ENCODE measurements at regions of chr3 and their contacts with region 1.

Region 1: GRCh38 chr3:4986782-4987537 is 7.7 kb downstream of the BHLHE40 start:
- DNase-seq: peak; percentile 97 to 99 (median 98)
- ATAC-seq: peak; percentile 84 to 92 (median 88)
- H3K4me3 ChIP-seq: peak overlapping the region; percentile 9 to 100 (median 48)
- H3K27ac ChIP-seq: peak overlapping the region; percentile 83 to 100 (median 100)
- H3K4me1 ChIP-seq: peaks cover 10 to 86% (median 64%) of the 10 kb centered on the region in 12 donors
- H3K27me3 ChIP-seq: no peaks in the 10 kb centered on the region
- CTCF ChIP-seq: peak in 3 of 12 donors; percentile 14 to 27 (median 16)
- POLR2A ChIP-seq: peak in 1 of 2 donors; percentile 70

Region 2: DNA sequence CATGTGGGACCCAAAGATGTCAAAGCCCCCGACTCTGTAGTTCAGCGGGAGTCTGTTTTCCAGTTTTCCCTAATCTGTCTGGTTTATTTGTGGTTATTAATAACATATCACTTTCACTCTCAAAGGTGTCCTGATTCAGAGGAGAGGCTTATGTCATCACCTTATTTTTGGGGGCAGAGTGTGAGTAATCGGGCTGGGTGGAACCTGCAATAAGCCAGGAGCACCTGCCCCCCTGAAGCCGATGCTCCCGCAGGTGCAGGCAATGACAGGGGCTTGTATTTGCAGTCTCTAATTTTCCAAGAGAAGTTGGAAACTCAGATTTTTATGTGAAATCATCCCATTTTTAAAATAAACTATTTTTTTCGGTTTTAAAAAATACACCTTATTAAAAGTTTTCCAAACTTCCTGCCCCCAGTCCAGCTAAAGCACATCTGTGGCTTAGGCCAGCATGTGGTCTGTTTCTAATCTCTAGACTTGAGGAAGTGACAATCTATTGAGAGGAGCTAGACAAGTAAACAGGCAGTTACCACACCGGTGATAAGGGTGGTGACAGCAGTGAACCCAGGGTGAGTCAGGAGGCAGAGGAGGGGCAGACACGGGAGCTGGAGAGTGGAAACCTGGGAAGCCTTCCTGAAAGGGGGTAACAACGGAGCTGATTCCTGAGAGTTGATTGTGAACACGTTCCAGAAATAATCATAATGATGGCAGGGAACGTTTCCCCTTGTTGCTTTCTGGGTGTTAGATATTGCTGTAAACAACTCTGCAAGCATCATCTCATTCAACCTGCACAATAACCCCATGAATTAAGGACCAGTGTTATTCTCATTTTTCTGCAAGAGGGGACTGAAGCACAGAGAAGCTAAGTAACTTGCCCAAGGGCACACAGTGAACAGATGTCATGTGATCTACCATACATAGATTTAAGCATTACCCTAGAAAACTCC is 29.5 kb after region 1 on chr3:
- intact Hi-C with region 1: loop called in 1 of 10 experiments (anchors 2 kb)
- DNase-seq: peak in 3 of 5 donors; percentile 50 to 80 (median 54)
- ATAC-seq: peak; percentile 39 to 80 (median 76)
- H3K4me3 ChIP-seq: no peak overlapping the region
- H3K27ac ChIP-seq: peak overlapping the region in 8 of 12 donors; percentile 4 to 85 (median 66)
- H3K4me1 ChIP-seq: peaks cover 6 to 71% (median 35%) of the 10 kb centered on the region in 12 donors
- H3K27me3 ChIP-seq: no peaks in the 10 kb centered on the region
- CTCF ChIP-seq: no peak
- POLR2A ChIP-seq: no peak

Measured in heart left ventricle (tissue), 16 donors.